Naive thymus-derived CD4-positive, alpha-beta T cell (primary cell): ENCODE measurements at regions of chr6 and their contacts with region 1.

Region 1: DNA sequence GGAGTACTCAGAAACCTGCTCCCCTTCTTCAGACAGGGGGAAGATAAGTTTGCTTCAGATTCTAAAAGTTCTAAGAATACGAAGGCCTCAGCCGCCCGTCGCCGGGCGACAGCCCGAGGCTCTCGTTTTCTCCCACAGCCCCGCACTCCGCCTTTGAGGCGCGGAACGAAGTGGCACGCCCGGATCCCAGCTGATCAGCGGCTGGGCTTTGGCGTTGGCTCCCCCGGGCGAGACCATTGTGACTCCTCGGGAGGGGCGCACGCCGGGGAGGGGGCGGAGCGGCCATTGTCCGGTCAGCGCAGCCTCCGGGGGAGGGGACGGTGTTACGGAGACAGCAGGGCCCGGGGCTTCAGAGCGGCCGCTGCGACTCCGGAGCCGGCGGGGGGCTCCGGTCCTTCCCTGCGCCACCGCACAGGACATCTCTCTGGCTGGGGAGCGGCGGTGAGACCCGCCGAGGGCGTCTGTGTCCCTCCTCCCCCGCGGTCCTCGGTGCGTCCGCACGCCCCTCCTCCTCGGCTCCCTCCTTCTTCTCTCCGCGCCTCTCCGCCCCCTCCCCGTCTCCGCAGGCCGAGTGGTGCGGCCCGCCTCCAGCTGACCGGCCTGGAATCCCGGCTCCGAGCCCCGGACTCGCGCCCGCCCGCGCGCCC is at the start of gene ZFAND3:
- DNase-seq: peak; percentile 87 to 96 (median 95)
- ATAC-seq: peak; percentile 90
- H3K4me3 ChIP-seq: peak within 1 kb of the TSS; percentile 85
- H3K4me3 Mint-ChIP-seq: peak within 1 kb of the TSS; percentile 90 to 100 (median 96)
- H3K27ac ChIP-seq: peak within 1 kb of the TSS; percentile 93
- H3K27ac Mint-ChIP-seq: peak within 1 kb of the TSS; percentile 94 to 99 (median 98)
- H3K4me1 ChIP-seq: peaks cover 30 to 31% of the 10 kb centered on the region in 2 donors
- H3K4me1 Mint-ChIP-seq: peaks cover 39 to 66% (median 55%) of the 10 kb centered on the region in 7 donors
- H3K27me3 ChIP-seq: no peaks in the 10 kb centered on the region
- H3K27me3 Mint-ChIP-seq: peaks cover 0 to 29% (median 0%) of the 10 kb centered on the region in 5 donors
- total RNA-seq, gene ZFAND3: 31.7 to 55.0 (median 42.5) TPM

Region 2: DNA sequence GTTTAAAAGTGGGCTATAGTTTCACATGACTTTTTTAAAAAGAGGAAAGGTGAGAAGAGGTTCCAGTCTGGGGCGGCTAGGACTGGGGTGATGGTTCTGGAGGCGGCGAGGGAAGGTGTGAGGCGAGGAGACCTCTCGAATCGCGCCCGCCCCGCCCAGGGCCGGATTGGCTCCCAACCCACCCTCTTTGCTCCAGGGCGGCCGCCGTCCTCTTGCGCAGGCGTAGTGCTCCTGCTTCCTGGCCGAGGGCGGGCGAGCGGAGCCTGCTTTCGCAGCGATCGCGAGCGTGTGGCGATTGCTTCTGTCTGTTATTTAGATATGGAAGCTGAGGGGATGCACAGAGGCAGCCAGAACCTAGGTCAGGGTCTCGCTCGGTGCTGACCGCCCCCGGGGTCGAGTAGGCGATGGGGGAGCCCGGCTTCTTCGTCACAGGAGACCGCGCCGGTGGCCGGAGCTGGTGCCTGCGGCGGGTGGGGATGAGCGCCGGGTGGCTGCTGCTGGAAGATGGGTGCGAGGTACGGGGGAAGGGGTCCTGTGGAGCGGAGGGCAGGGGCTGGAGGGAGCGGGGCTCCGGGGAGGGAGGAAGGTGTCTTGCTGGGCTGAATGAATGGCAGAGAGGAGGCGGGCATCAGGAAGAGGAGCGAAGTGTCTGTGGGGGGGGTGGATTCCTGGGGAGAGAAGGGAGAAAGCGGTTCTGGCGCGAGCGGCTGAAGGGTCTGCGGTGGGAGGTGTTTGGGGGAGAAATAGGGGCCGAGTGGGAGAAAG is 465.4 kb before region 1 on chr6 and contains the start of gene RNF8:
- CTCF ChIA-PET with region 1: no interaction called
- POLR2A ChIA-PET with region 1: no interaction called
- intact Hi-C with region 1: loop called (anchors 5 to 10 kb)
- DNase-seq: peak; percentile 72 to 92 (median 84)
- ATAC-seq: peak; percentile 96
- H3K4me3 ChIP-seq: peak within 1 kb of the TSS; percentile 94
- H3K4me3 Mint-ChIP-seq: peak within 1 kb of the TSS; percentile 90 to 98 (median 95)
- H3K27ac ChIP-seq: peak within 1 kb of the TSS; percentile 79
- H3K27ac Mint-ChIP-seq: peak within 1 kb of the TSS; percentile 81 to 93 (median 88)
- H3K4me1 ChIP-seq: peaks cover 7 to 14% of the 10 kb centered on the region in 2 donors
- H3K4me1 Mint-ChIP-seq: peaks cover 21 to 49% (median 37%) of the 10 kb centered on the region in 7 donors
- H3K27me3 ChIP-seq: no peaks in the 10 kb centered on the region
- H3K27me3 Mint-ChIP-seq: no peaks in the 10 kb centered on the region
- total RNA-seq, gene RNF8: 7.1 to 26.0 (median 15.8) TPM

Region 3: GRCh38 chr6:37499433-37500293 is 319.6 kb before region 1 on chr6 and contains the start of gene CCDC167:
- CTCF ChIA-PET with region 1: no interaction called
- POLR2A ChIA-PET with region 1: interaction called, 3 read pairs
- intact Hi-C with region 1: loop called in 1 of 2 experiments (anchors 5 kb)
- DNase-seq: peak; percentile 86 to 96 (median 90)
- ATAC-seq: peak; percentile 76
- H3K4me3 ChIP-seq: peak within 1 kb of the TSS; percentile 78
- H3K4me3 Mint-ChIP-seq: peak within 1 kb of the TSS; percentile 90 to 100 (median 98)
- H3K27ac ChIP-seq: peak within 1 kb of the TSS; percentile 91
- H3K27ac Mint-ChIP-seq: peak within 1 kb of the TSS; percentile 84 to 99 (median 95)
- H3K4me1 ChIP-seq: peaks cover 60 to 67% of the 10 kb centered on the region in 2 donors
- H3K4me1 Mint-ChIP-seq: peaks cover 60 to 93% (median 85%) of the 10 kb centered on the region in 7 donors
- H3K27me3 ChIP-seq: no peaks in the 10 kb centered on the region
- H3K27me3 Mint-ChIP-seq: no peaks in the 10 kb centered on the region
- total RNA-seq, gene CCDC167: 13.8 to 55.1 (median 18.0) TPM

Region 4: GRCh38 chr6:37791156-37791919 is 28.0 kb before region 1 on chr6:
- CTCF ChIA-PET with region 1: no interaction called
- POLR2A ChIA-PET with region 1: interaction called, 6 read pairs
- intact Hi-C with region 1: loop called (anchors 1 to 2 kb)
- DNase-seq: peak; percentile 29 to 83 (median 59)
- ATAC-seq: peak; percentile 99
- H3K4me3 ChIP-seq: no peak overlapping the region
- H3K4me3 Mint-ChIP-seq: no peak overlapping the region
- H3K27ac ChIP-seq: no peak overlapping the region
- H3K27ac Mint-ChIP-seq: no peak overlapping the region
- H3K4me1 ChIP-seq: no peaks in the 10 kb centered on the region
- H3K4me1 Mint-ChIP-seq: peaks cover 0 to 11% (median 0%) of the 10 kb centered on the region in 7 donors
- H3K27me3 ChIP-seq: no peaks in the 10 kb centered on the region
- H3K27me3 Mint-ChIP-seq: peaks cover 0 to 10% (median 0%) of the 10 kb centered on the region in 5 donors

Region 5: DNA sequence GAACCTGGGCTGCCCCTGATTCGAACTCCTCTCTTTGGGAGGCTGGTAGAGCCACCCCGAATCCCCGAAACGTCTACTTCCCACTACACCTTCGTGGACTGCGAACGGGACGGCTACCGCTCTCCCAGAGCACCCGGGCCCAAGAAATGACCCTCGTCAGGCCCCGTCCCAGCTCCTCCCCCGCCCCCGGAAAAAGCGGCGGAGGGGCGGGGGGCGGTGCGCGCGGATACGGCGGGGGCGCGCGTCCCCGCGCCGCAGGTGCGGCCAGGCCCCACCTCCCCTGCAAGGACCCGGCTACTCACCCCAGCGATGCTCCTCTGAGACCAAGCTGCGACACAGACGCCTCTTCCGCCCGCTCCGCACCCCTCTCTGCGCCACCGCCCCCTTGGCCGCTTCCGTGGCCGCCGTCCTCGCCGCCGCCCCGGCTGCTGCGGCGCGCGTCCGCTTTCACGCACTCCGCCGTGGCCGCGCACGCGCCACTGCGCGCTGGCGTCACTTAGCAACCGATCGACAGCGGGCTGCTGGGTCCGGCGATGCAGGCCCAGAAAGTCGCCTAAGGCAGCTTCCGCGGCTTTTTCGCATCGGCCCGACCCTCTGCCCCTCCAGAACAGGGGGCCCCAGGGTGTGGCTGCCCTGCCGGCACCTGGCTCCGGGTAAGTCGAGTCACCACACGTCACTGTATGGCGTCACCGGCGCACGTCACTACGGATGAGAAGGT is 820.4 kb after region 1 on chr6 and contains the start of gene BTBD9:
- CTCF ChIA-PET with region 1: no interaction called
- POLR2A ChIA-PET with region 1: no interaction called
- intact Hi-C with region 1: loop called in 1 of 2 experiments (anchors 2 kb)
- DNase-seq: peak; percentile 83 to 92 (median 90)
- ATAC-seq: peak; percentile 87
- H3K4me3 ChIP-seq: peak within 1 kb of the TSS; percentile 90
- H3K4me3 Mint-ChIP-seq: peak within 1 kb of the TSS; percentile 74 to 94 (median 90)
- H3K27ac ChIP-seq: peak within 1 kb of the TSS; percentile 94
- H3K27ac Mint-ChIP-seq: peak within 1 kb of the TSS; percentile 88 to 96 (median 91)
- H3K4me1 ChIP-seq: peaks cover 16 to 22% of the 10 kb centered on the region in 2 donors
- H3K4me1 Mint-ChIP-seq: peaks cover 40 to 65% (median 57%) of the 10 kb centered on the region in 7 donors
- H3K27me3 ChIP-seq: no peaks in the 10 kb centered on the region
- H3K27me3 Mint-ChIP-seq: no peaks in the 10 kb centered on the region
- total RNA-seq, gene BTBD9: 20.6 to 58.8 (median 43.6) TPM